SK-N-SH (cell line): ENCODE measurements at regions of chr15 and their contacts with region 1.

Region 1: GRCh38 chr15:38563723-38564519 is 693 bp downstream of the RASGRP1 start:
- DNase-seq: peak; percentile 85
- H3K4me3 ChIP-seq: peak overlapping the region; percentile 56 to 63
- H3K27ac ChIP-seq: no peak overlapping the region
- H3K4me1 ChIP-seq: peaks cover 0 to 16% of the 10 kb centered on the region in 2 experiments; a peak in 1 of 4 replicates
- H3K27me3 ChIP-seq: peaks cover 6% of the 10 kb centered on the region; the same call in 1 of the 2 replicates
- CTCF ChIP-seq: peak; percentile 87
- EP300 ChIP-seq: no peak
- RAD21 ChIP-seq: peak; percentile 51

Region 2: DNA sequence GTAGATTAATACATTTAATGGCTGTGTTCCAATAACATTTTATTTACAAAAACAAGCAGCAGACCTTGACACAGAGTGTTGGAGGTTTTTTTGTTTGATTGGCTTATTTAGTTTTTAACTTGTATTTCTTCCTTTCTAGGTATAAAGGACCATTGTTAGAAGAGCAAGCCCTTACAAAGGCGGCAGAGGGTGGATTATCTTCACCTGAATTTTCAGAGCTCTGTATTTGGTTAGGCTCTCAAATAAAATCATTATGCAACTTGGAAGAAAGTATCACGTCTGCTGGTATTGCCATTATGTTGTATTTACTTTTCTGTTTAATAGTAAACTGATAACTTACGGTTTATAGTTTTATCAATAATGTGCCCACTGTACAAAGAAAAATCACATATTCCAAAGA is 100.0 kb before region 1 on chr15:
- CTCF ChIA-PET with region 1: interaction called, 19 read pairs
- POLR2A ChIA-PET with region 1: no interaction called
- DNase-seq: no peak
- H3K4me3 ChIP-seq: no peak overlapping the region
- H3K27ac ChIP-seq: no peak overlapping the region
- H3K4me1 ChIP-seq: peaks cover 5 to 7% of the 10 kb centered on the region in 2 experiments; a peak in 1 of 4 replicates
- H3K27me3 ChIP-seq: no peaks in the 10 kb centered on the region
- CTCF ChIP-seq: no peak
- EP300 ChIP-seq: no peak
- RAD21 ChIP-seq: no peak

Region 3: GRCh38 chr15:38521316-38521715 is 42.6 kb before region 1 on chr15:
- CTCF ChIA-PET with region 1: interaction called, 18 read pairs
- POLR2A ChIA-PET with region 1: no interaction called
- DNase-seq: peak; percentile 9
- H3K4me3 ChIP-seq: no peak overlapping the region
- H3K27ac ChIP-seq: no peak overlapping the region
- H3K4me1 ChIP-seq: no peaks in the 10 kb centered on the region
- H3K27me3 ChIP-seq: no peaks in the 10 kb centered on the region
- CTCF ChIP-seq: no peak
- EP300 ChIP-seq: no peak
- RAD21 ChIP-seq: peak; percentile 46; the same call in 1 of the 2 replicates

Region 4: DNA sequence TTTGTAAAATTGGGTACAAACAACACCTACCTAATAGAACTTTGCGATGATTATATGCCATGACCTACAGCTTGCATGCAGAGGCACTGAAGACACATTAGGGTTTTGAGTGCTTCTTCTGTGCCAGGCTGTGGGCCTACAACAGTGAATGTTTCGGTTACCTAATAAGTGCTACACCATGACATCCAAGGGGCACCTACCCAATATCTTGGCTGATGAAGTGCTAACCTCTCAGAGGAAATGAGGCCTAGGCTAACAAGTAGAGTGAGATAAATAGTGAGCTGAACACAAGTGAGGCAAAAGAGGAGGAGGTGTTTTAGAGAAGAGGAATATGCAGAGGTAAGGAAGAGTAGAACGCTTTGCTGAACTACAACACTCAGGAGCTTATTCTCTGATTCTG is 12.9 kb after region 1 on chr15:
- CTCF ChIA-PET with region 1: interaction called, 21 read pairs
- POLR2A ChIA-PET with region 1: no interaction called
- DNase-seq: no peak
- H3K4me3 ChIP-seq: no peak overlapping the region
- H3K27ac ChIP-seq: no peak overlapping the region
- H3K4me1 ChIP-seq: no peaks in the 10 kb centered on the region
- H3K27me3 ChIP-seq: peaks cover 19% of the 10 kb centered on the region; the same call in 1 of the 2 replicates
- CTCF ChIP-seq: no peak
- EP300 ChIP-seq: no peak
- RAD21 ChIP-seq: no peak

Region 5: GRCh38 chr15:38647683-38648082 is 83.8 kb after region 1 on chr15:
- CTCF ChIA-PET with region 1: interaction called, 14 read pairs
- POLR2A ChIA-PET with region 1: no interaction called
- DNase-seq: no peak
- H3K4me3 ChIP-seq: no peak overlapping the region
- H3K27ac ChIP-seq: no peak overlapping the region
- H3K4me1 ChIP-seq: no peaks in the 10 kb centered on the region
- H3K27me3 ChIP-seq: peaks cover 6% of the 10 kb centered on the region; the same call in 1 of the 2 replicates
- CTCF ChIP-seq: peak; percentile 45
- EP300 ChIP-seq: no peak
- RAD21 ChIP-seq: peak; percentile 37

Region 6: DNA sequence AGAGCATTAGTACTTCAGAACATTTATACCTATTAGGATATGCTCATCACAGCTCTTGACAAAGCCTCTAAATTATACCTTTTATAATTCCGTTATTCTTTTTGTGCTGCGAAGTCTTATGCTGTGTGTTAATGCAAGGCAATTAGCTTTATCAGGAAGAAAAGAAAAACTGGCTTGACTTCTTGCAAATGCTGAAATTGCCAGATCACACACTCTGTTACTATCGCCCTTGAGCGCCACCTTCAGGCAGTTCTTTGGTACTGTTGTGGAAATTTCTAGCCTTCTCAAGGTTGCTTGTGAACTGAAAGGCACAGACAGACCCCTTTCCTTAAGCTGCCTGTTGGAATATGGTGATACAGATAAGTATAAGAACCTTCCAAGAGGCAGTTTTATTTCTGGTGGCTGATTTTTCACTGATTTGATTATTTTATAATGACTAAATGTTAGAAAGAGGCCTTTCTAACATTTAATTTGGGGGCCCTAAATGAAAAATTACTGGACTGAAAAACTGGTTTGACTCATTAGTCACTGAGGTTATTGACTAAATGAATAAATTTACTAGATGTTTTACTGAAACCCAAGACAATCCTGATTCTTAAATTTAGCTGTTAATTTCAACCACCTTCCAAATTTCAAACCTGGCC is 126.9 kb after region 1 on chr15:
- CTCF ChIA-PET with region 1: interaction called, 110 read pairs
- POLR2A ChIA-PET with region 1: interaction called, 3 read pairs
- DNase-seq: peak; percentile 32
- H3K4me3 ChIP-seq: no peak overlapping the region
- H3K27ac ChIP-seq: no peak overlapping the region
- H3K4me1 ChIP-seq: peaks cover 0 to 22% of the 10 kb centered on the region in 2 experiments; a peak in 2 of 4 replicates
- H3K27me3 ChIP-seq: no peaks in the 10 kb centered on the region
- CTCF ChIP-seq: peak; percentile 86
- EP300 ChIP-seq: no peak
- RAD21 ChIP-seq: peak; percentile 70

Region 7: GRCh38 chr15:38864122-38864521 is 300.2 kb after region 1 on chr15:
- CTCF ChIA-PET with region 1: no interaction called
- POLR2A ChIA-PET with region 1: no interaction called
- DNase-seq: no peak
- H3K4me3 ChIP-seq: no peak overlapping the region
- H3K27ac ChIP-seq: no peak overlapping the region
- H3K4me1 ChIP-seq: peaks cover 0 to 14% of the 10 kb centered on the region in 2 experiments; a peak in 3 of 4 replicates
- H3K27me3 ChIP-seq: no peaks in the 10 kb centered on the region
- CTCF ChIP-seq: peak; percentile 21; the same call in 1 of the 2 replicates
- EP300 ChIP-seq: no peak
- RAD21 ChIP-seq: no peak